Natural killer cell (primary cell): ENCODE measurements at regions of chr9 and their contacts with region 1.

Region 1: DNA sequence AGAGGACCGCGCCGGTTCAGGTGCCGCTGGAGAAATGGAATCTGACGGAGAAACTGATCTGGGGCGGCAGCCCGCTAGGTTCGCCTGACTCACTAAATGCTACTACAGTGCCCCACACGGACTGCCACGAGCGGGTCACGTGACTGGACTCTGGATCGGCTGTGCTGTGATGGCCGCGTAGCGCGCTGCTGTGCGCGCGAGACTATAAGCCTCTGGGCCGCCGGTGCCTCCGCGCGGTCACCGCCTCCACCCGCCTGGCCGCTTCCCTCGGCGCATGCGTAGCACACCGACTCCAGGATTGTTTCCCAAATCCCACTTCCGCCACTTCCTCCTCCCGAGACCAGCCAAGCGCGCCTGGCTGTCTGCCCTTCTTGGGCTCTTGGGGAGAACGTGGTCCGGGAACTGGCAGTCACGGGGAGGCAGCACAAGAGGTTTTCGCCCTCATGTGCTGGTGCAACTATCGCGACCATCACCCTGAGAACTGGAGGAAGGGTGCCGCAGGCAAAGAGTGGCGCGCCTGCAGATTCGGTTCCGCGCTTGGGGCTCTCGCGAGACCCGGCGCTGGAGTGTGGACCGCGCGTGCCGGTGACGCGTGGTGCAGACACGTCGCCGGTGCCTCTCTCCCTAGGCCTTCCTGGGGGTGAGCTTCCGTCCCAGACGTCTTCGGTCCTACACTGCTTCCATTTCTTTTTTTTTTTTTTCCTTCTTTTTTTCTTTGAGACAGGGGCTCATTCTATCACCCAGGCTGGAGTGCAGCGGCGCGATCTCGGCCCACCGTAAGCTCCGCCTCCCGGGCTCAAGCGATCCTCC is 35.8 kb upstream of the GLDC start:
- DNase-seq: peak; percentile 79 to 96
- ATAC-seq: peak; percentile 85 to 95 (median 89)
- H3K4me3 ChIP-seq: peak overlapping the region; percentile 89
- H3K4me3 Mint-ChIP-seq: peak overlapping the region; percentile 96
- H3K27ac ChIP-seq: peak overlapping the region; percentile 97
- H3K27ac Mint-ChIP-seq: peak overlapping the region; percentile 97 to 98
- H3K4me1 ChIP-seq: peaks cover 16% of the 10 kb centered on the region
- H3K4me1 Mint-ChIP-seq: peaks cover 23 to 24% of the 10 kb centered on the region in 2 donors
- H3K27me3 ChIP-seq: no peaks in the 10 kb centered on the region
- H3K27me3 Mint-ChIP-seq: no peaks in the 10 kb centered on the region
- CTCF ChIP-seq: no peak

Region 2: GRCh38 chr9:6703898-6704639 is 22.7 kb after region 1 on chr9:
- intact Hi-C with region 1: loop called (anchors 1 kb)
- DNase-seq: peak; percentile 83 to 94
- ATAC-seq: peak; percentile 84 to 94 (median 93)
- H3K4me3 ChIP-seq: peak overlapping the region; percentile 99
- H3K4me3 Mint-ChIP-seq: peak overlapping the region; percentile 96
- H3K27ac ChIP-seq: peak overlapping the region; percentile 96
- H3K27ac Mint-ChIP-seq: peak overlapping the region; percentile 92 to 99
- H3K4me1 ChIP-seq: peaks cover 16% of the 10 kb centered on the region
- H3K4me1 Mint-ChIP-seq: peaks cover 7 to 9% of the 10 kb centered on the region in 2 donors
- H3K27me3 ChIP-seq: no peaks in the 10 kb centered on the region
- H3K27me3 Mint-ChIP-seq: peaks cover 0 to 3% of the 10 kb centered on the region in 2 donors
- CTCF ChIP-seq: no peak